MCF 10A (cell line): ENCODE measurements at regions of chr2 and their contacts with region 1.

Region 1: DNA sequence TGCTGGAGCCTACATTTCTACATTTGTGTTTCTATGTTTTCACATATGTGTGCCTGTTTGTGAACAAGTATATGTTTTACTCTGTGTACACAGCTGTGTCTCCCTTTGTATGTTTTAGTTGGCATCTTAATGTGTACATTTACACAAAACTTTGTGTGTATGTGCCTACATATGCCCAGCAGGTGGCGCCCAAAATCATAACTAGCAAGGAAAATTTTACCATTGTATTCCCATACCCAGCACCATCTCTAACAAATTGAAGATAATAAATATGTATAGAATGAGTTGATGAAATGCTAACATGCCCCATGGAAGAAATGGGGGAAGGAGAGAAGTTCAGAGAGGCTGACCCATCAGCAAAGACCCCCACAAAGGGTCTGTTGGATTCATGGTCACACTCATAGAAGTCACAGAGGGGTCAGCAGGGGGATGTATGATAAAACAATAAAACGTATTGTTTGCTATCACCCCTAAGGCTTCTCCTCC is 48.1 kb downstream of the PKDCC start:
- DNase-seq: peak; percentile 76
- H3K4me3 Mint-ChIP-seq: no peak overlapping the region
- H3K27ac Mint-ChIP-seq: no peak overlapping the region
- H3K4me1 Mint-ChIP-seq: no peaks in the 10 kb centered on the region
- H3K27me3 Mint-ChIP-seq: peaks cover 34% of the 10 kb centered on the region
- CTCF ChIP-seq: peak; percentile 70

Region 2: DNA sequence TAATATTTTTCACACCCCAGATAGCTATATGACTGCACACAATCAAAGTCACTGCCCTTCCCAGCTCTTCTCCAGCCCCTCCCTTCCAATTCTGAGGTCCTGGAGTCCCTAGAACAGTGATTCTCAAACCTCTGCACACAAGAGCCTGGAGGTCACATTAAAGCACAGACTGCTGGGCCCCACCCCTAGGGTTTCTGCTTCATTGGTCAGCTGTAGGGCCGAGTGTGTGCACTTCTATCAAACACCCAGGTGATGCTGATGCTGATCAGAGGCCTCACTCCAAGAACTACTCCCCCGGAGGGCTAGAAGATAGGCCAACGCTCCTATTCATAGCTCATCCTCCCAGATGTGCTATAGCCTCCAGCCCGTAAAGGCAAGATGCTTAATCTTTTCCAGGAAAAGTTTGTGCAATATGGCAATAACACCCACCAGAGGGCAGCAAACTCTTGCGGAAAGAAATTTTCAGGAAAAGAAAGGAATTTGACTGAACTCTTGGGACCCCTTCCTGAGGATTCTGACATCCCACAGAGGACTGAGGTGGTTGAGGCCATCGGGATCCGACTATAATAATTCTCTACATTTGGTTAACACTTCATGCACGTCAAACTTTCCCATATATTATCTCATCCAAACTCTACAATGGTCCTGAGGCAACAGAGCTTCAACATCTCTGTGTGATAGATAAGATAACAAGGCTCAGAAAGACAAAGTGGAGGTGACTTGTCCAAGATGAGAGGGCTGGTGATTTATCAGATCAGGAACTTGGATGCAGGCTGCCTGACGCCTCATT is 242.3 kb before region 1 on chr2:
- CTCF ChIA-PET with region 1: interaction called, 382 read pairs
- POLR2A ChIA-PET with region 1: interaction called, 3 read pairs
- intact Hi-C with region 1: no loop called
- DNase-seq: peak; percentile 59
- H3K4me3 Mint-ChIP-seq: no peak overlapping the region
- H3K27ac Mint-ChIP-seq: no peak overlapping the region
- H3K4me1 Mint-ChIP-seq: peaks cover 2% of the 10 kb centered on the region
- H3K27me3 Mint-ChIP-seq: peaks cover 15% of the 10 kb centered on the region
- CTCF ChIP-seq: peak; percentile 67

Region 3: DNA sequence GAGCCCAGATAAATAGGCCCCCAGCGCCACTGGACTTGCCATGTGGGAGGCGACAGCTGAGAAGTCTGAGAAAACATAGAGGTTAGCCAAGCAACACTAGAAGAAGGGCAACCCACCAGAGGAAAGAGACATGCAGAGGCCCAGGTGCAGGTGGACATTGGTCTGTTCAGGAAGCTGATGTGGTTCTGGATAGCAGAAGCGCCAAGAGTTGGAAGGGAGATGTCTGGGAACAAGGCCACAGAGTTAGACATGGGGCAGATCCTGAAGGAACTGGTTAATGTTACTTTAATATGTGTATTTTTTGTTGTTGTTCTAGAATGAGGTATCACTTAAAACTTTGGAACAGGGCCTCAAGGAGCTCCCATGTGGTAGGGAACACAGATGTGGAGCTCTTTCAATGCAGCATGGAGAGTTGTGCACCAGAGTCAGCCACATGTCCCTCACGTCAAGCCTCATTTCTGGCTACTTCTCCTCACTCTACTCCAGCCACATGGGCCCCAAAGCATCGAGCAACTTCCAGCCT is 110.3 kb before region 1 on chr2:
- CTCF ChIA-PET with region 1: no interaction called
- POLR2A ChIA-PET with region 1: no interaction called
- intact Hi-C with region 1: no loop called
- DNase-seq: no peak
- H3K4me3 Mint-ChIP-seq: no peak overlapping the region
- H3K27ac Mint-ChIP-seq: no peak overlapping the region
- H3K4me1 Mint-ChIP-seq: no peaks in the 10 kb centered on the region
- H3K27me3 Mint-ChIP-seq: no peaks in the 10 kb centered on the region
- CTCF ChIP-seq: no peak

Region 4: GRCh38 chr2:42171396-42171980 is 75.5 kb after region 1 on chr2:
- CTCF ChIA-PET with region 1: interaction called, 13 read pairs
- POLR2A ChIA-PET with region 1: no interaction called
- intact Hi-C with region 1: no loop called
- DNase-seq: no peak
- H3K4me3 Mint-ChIP-seq: no peak overlapping the region
- H3K27ac Mint-ChIP-seq: no peak overlapping the region
- H3K4me1 Mint-ChIP-seq: peaks cover 8% of the 10 kb centered on the region
- H3K27me3 Mint-ChIP-seq: no peaks in the 10 kb centered on the region
- CTCF ChIP-seq: no peak

Region 5: DNA sequence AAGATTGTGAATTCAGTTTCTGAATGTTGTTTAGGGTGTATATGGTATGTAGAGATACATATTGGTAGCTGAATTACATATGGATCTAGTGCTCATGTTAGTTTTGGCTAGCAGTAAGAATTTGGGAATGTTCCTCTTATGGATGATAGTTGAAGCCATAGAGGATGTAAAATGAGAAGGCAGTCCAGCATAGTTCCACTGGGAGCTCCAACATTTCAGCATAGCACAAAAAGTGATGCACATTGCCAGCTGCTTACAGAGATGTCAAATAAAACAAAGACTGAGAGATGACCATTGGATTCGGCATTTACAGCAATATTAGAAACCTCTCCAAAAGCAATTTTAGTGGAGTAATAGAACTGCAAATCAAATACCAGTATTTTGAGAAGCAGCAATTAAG is 150.6 kb after region 1 on chr2:
- CTCF ChIA-PET with region 1: interaction called, 222 read pairs
- POLR2A ChIA-PET with region 1: interaction called, 7 read pairs
- intact Hi-C with region 1: no loop called
- DNase-seq: no peak
- H3K4me3 Mint-ChIP-seq: no peak overlapping the region
- H3K27ac Mint-ChIP-seq: no peak overlapping the region
- H3K4me1 Mint-ChIP-seq: peaks cover 5% of the 10 kb centered on the region
- H3K27me3 Mint-ChIP-seq: no peaks in the 10 kb centered on the region
- CTCF ChIP-seq: no peak

Region 6: GRCh38 chr2:42360890-42361727 is 265.1 kb after region 1 on chr2 and contains the start of gene COX7A2L:
- CTCF ChIA-PET with region 1: interaction called, 14 read pairs
- POLR2A ChIA-PET with region 1: interaction called, 5 read pairs
- intact Hi-C with region 1: loop called (anchors 1 kb)
- DNase-seq: peak; percentile 96
- H3K4me3 Mint-ChIP-seq: peak within 1 kb of the TSS; percentile 79
- H3K27ac Mint-ChIP-seq: peak within 1 kb of the TSS; percentile 86
- H3K4me1 Mint-ChIP-seq: peaks cover 32% of the 10 kb centered on the region
- H3K27me3 Mint-ChIP-seq: no peaks in the 10 kb centered on the region
- CTCF ChIP-seq: no peak
- total RNA-seq, gene COX7A2L: 190 and 249 TPM in 2 replicates

Region 7: DNA sequence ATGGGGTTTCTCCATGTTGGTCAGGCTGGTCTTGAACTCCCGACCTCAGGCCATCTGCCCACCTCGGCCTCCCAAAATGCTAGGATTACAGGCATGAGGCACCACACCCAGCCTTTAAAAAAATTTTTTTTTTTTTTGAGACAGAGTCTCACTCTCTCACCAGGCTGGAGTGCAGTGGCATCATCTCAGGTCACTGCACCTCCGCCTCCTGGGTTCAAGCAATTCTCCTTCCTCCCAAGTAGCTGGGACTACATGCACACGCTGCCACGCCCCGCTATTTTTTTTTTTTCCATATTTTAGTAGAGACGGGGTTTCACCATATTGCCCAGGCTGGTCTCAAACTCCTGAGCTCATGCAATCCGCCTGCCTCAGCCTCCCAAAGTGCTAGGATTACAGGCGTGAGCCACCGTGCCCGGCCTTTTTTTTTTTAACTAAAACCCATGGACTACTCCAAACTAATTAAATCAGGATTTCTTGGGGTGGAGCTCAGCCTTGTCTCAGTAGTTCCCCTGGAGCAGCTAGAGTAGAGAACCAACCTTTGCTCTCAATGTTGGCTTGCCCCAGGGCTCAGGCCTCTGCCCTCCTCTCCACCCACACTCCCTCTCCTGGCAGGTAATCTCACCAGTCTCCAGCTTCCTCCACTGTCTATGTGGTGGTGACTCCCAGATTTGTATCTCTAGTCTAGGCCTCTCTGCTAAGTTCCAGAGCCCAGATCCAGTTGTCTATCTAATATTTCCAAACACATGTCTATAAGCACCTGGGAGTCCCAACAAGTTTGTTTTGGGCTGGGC is 462.7 kb after region 1 on chr2:
- CTCF ChIA-PET with region 1: no interaction called
- POLR2A ChIA-PET with region 1: no interaction called
- intact Hi-C with region 1: no loop called
- DNase-seq: no peak
- H3K4me3 Mint-ChIP-seq: no peak overlapping the region
- H3K27ac Mint-ChIP-seq: no peak overlapping the region
- H3K4me1 Mint-ChIP-seq: no peaks in the 10 kb centered on the region
- H3K27me3 Mint-ChIP-seq: no peaks in the 10 kb centered on the region
- CTCF ChIP-seq: no peak